Tibial artery (tissue), 4 donors: ENCODE measurements at regions of chr3 and their contacts with region 1.

Region 1: GRCh38 chr3:13653631-13654279 is 104.8 kb downstream of the FBLN2 start:
- DNase-seq: no peak
- H3K4me3 ChIP-seq: no peak overlapping the region
- H3K27ac ChIP-seq: no peak overlapping the region
- H3K4me1 ChIP-seq: peaks cover 0 to 15% (median 13%) of the 10 kb centered on the region in 4 donors
- H3K27me3 ChIP-seq: peaks cover 0 to 57% of the 10 kb centered on the region in 2 donors
- CTCF ChIP-seq: no peak

Region 2: GRCh38 chr3:13495921-13496723 is 157.6 kb before region 1 on chr3:
- intact Hi-C with region 1: loop called (anchors 2 kb)
- DNase-seq: peak; percentile 86 to 88
- H3K4me3 ChIP-seq: no peak overlapping the region
- H3K27ac ChIP-seq: no peak overlapping the region
- H3K4me1 ChIP-seq: peaks cover 3 to 11% (median 6%) of the 10 kb centered on the region in 4 donors
- H3K27me3 ChIP-seq: no peaks in the 10 kb centered on the region
- CTCF ChIP-seq: peak; percentile 94 to 95